AG04449 (cell line): ENCODE measurements at regions of chr1 and their contacts with region 1.

Region 1: DNA sequence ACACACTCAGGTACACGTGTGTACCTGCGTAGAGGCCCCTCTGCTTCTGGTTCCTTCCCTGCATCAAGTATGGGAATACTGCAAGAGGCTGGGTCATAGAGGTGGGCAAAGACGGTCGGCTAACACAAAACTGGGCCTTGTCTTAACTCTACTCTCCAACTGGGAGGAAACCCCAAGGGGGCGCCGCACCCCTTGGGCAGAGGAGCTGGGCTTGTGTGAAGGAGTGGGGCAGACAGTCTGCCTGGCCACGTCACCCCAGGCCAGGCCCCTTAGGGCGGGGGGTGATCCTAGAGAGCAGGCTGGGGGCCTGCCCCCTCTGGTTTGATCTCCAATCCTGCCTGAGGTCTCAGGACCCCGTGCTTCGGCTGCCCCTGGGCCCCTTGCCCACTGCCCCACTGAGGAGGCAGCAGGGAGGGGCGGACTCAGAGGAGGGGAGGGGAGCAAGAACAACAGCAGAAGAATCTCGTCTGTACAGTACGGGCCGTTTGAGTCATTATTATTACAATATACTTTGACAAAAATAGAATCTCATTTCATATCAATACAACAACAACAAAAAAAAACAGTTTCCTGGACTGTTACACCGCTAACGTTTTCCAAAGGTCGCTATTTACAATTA is 34.7 kb downstream of the MEF2D start:
- DNase-seq: no peak
- H3K4me3 ChIP-seq: no peak overlapping the region
- CTCF ChIP-seq: peak; percentile 17

Region 2: DNA sequence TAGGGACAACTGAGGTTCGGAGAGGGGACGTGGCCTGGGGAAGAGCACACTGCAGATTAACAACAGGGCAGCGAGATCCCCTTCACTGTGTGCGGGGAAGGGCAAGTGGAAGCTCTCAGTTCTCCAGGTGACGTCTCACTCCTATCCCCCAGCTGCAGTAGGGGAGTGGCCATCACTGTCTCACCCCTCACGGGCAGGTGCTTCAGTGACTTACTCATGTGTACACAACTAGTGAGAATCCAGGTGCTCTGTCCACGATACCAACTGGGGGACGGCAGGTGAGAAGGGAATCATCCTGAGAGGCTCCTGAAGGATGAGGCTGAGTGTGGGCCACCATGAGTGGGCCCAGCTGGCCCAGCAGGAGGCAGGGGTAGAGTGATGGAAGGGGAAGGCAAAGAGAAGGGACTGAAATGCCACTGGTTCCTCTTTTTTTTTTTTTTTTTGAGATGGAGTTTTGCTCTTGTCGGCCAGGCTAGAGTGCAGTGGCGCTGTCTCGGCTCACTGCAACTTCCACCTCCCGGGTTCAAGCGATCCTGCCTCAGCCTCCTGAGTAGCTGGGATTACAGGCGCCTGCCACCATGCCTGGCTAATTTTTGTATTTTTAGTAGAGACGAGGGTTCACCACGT is 70.9 kb before region 1 on chr1:
- CTCF ChIA-PET with region 1: no interaction called
- POLR2A ChIA-PET with region 1: no interaction called
- DNase-seq: no peak
- H3K4me3 ChIP-seq: no peak overlapping the region
- CTCF ChIP-seq: no peak

Region 3: GRCh38 chr1:156480411-156481192 is 14.7 kb after region 1 on chr1:
- CTCF ChIA-PET with region 1: interaction called, 74 read pairs
- POLR2A ChIA-PET with region 1: interaction called, 3 read pairs
- DNase-seq: no peak
- H3K4me3 ChIP-seq: no peak overlapping the region
- CTCF ChIP-seq: peak; percentile 84